Right ventricle myocardium inferior (tissue), 1 donor: ENCODE measurements at regions of chr6 and their contacts with region 1.

Region 1: DNA sequence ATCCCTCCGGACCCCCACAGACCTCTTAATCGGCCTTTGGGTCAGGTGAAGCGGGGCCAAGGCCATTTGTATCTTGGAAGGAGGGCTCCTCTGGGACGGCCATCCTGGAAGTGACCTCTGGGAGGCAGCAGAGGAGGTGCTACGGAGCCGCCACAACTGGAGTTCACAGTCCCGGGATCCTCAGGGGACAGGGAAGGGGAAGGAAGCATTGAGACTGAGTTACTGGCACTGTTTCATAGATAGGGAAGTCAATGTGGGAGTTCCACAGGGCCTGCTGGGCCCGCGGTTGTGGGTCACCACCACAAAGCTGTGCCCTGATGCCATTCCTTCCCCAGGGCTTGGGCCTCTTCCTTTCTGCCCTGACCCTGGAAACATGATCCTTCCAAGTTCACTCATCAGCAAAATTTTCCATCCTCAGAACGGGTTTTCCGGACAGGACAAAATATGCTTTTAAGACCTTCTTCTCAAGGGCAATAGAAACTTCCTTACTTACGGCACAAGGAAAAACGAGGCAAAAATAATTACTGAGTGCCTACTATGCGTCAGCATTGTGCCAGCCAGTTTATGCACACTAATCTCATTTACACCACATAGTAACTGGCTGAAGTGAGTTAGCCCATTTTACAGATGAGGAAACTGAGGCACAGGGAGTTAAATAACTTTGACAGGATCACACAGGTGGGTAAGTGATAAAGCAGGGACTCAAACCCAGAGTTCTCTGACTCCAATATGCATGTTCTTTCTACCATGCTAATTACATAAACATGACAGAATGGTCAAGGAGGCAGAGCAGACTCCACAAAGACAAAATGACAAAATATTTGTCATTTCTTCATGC is 143.8 kb downstream of the UNC5CL start:
- DNase-seq: peak; percentile 66
- ATAC-seq: peak; percentile 67

Region 2: DNA sequence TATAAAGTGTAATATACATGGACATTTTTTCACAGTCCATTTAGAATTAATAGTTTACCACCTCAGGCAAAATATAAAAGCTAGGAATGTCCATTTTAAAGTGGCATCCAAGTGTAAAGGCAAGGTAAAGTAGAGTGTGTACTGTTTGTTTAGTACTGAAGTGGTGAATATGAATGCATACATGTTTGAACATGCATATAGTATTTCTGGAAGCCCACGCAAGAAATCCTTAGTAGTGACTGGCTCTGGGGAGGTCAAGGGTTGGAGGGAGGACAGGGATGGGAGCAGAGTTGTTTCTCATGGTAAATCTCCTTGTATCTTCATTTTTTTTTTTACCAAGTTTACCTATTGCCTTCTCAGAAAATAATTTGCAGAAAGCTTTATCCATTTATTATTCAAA is 14.6 kb after region 1 on chr6:
- intact Hi-C with region 1: loop called (anchors 2 kb)
- DNase-seq: no peak
- ATAC-seq: no peak

Region 3: GRCh38 chr6:41027799-41028628 is 132.8 kb after region 1 on chr6:
- intact Hi-C with region 1: loop called (anchors 1 kb)
- DNase-seq: peak; percentile 94
- ATAC-seq: peak; percentile 93